ENCODE measurements at regions of chr7 and their contacts with region 1.

Region 1: GRCh38 chr7:64706625-64707292 is 40.8 kb downstream of the ZNF107 start:
- DNase-seq: no peak
- ATAC-seq: no peak
- H3K4me3 ChIP-seq: no peak overlapping the region
- H3K27ac ChIP-seq: no peak overlapping the region
- H3K4me1 ChIP-seq: no peaks in the 10 kb centered on the region
- H3K27me3 ChIP-seq: no peaks in the 10 kb centered on the region
- CTCF ChIP-seq: no peak
- EP300 ChIP-seq: no peak
- POLR2A ChIP-seq: no peak
- RAD21 ChIP-seq: no peak

Region 2: DNA sequence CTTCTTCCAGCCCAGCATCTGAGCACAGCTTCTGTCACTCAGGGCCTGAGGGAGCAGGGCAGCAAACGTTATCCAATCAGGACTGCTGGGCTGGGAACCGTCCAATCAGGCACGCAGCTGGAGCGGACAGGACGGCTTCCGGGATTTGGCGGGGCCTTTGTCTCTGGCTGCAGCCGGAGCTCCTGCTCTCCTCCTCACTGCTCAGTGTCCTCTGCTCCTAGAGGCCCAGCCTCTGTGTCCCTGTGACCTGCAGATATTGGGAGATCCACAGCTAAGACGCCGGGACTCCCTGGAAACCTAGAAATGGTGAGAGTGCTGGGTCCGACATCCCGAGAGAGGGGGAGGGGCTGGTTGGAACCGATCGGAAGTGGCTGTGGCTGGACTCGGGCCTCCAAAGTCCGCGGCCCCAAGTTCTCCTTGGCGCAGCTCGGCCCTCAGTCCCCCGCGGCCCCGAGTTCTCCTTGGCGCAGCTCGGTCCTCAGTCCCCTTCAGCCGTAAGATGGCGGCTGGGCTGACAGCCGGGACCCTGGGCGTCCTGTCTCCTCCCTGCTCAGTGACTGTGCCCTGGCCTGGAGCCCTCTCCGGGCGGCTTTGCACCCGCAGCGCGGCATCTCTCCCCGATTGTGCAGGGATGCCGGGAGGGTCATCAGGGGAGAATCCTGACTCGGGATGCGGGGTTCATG is 40.6 kb before region 1 on chr7 and contains the start of gene ZNF107:
- CTCF ChIA-PET with region 1: no interaction called
- POLR2A ChIA-PET with region 1: no interaction called
- in situ Hi-C with region 1: no loop called
- intact Hi-C with region 1: loop called (anchors 5 kb)
- DNase-seq: peak; percentile 93 to 97 (median 94)
- ATAC-seq: peak; percentile 99
- H3K4me3 ChIP-seq: peak within 1 kb of the TSS; percentile 97
- H3K27ac ChIP-seq: peak within 1 kb of the TSS; percentile 87
- H3K4me1 ChIP-seq: peaks cover 6 to 13% of the 10 kb centered on the region in 2 experiments
- H3K27me3 ChIP-seq: no peaks in the 10 kb centered on the region
- CTCF ChIP-seq: no peak
- EP300 ChIP-seq: no peak
- POLR2A ChIP-seq: peak; percentile 90
- RAD21 ChIP-seq: 0 out of 4 replicates have a peak, but pooled peaks of 1 of the 2 experiments have one; percentile 9
- polyA plus RNA-seq, gene ZNF107: 2.4 to 4.5 TPM

Region 3: DNA sequence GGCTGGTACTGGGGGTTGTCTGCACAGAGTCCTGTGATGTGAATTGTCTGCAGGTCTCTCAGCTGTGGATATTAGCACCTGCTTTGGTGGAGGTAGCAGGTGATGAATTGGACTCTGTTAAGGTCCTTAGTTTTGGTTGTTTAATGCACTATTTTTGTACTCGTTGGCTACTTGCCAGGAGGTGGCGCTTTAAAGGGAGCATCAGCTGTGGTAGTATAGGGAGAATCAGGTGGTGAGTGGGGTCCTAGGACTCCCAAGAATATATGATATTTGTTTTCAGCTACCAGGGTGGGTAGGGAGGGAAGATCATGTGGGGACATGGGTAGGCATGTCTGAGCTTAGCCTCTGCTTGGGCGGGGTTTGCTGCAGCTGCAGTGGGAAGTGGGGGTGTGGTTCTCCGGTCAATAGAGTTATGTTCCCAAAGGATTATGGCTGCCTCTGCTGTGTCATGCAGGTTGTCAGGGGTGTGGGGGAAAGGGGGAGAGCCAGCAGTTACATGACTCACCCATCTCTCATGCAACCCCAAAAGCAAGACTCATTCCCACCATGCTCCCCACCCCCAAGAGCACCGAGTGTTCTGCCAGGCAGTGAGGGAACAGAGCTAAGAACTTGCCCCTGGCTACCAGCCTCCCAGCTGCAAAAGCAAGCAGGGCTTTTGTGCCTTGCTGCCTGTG is 142.6 kb after region 1 on chr7:
- CTCF ChIA-PET with region 1: no interaction called
- POLR2A ChIA-PET with region 1: no interaction called
- in situ Hi-C with region 1: no loop called
- intact Hi-C with region 1: loop called (anchors 10 kb)
- DNase-seq: peak; percentile 50 to 85 (median 64)
- ATAC-seq: peak; percentile 93
- H3K4me3 ChIP-seq: no peak overlapping the region
- H3K27ac ChIP-seq: peak overlapping the region; percentile 66
- H3K4me1 ChIP-seq: peaks cover 8 to 14% of the 10 kb centered on the region in 2 experiments; a peak in 3 of 5 replicates
- H3K27me3 ChIP-seq: no peaks in the 10 kb centered on the region
- CTCF ChIP-seq: no peak
- EP300 ChIP-seq: peak; percentile 48; the same call in 1 of the 2 replicates
- POLR2A ChIP-seq: no peak; the same call in 1 of the 2 replicates
- RAD21 ChIP-seq: no peak

Measured in K562 (cell line).